ENCODE measurements at regions of chr9 and their contacts with region 1.

Region 1: DNA sequence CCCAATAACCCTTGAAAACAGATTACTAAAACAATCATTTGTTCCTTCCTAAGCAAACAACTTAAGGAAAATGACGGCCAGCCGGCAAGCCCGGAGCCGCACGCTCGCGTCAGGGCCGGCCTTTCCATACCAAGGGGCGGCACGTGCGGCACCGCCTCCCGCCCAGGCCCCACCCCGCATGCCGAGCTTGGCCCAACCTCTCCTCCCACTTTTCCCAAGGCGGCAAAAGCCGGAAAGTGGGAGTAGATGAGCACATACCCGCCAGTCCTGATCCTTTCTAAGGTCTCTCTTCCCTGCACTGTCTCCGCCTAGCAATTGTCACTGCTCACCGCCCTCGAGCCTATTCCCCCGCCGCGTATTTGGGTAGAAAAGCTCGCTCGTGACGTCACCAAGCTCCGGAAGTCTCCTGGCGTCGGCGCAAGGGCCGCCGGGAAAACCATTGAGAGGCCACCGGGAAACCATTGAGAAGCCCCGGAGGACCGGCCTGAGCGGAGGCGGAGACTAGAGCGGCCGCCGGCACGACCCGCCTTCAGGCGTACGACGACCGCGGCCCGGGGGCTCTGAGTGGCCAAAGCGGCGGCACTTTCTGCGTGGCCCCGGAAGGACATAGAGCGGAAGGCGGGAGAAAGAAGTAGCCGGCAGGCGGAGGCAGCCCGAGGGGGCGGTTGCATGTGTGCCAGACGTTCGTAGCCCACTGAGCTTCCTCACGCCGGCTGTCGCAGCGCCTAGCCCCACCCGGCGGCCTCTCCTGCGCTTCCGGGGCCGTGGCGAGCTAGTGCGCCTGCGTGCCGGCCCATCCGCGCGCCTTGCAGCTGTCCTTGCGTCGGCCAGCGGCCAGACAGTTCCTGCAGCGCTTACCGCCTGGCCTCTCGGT is at the starts of genes NCBP1 and TSTD2:
- DNase-seq: peak; percentile 99
- ATAC-seq: peak; percentile 91
- H3K4me3 ChIP-seq: peak within 1 kb of the TSS; percentile 94 to 99 (median 95)
- H3K4me3 Mint-ChIP-seq: peak within 1 kb of the TSS; percentile 97
- H3K27ac ChIP-seq: peak within 1 kb of the TSS; percentile 92 to 93
- H3K27ac Mint-ChIP-seq: peak within 1 kb of the TSS; percentile 98
- H3K4me1 ChIP-seq: peaks cover 26 to 35% of the 10 kb centered on the region in 2 donors
- H3K4me1 Mint-ChIP-seq: peaks cover 58% of the 10 kb centered on the region
- H3K27me3 ChIP-seq: no peaks in the 10 kb centered on the region
- H3K27me3 Mint-ChIP-seq: no peaks in the 10 kb centered on the region
- CTCF ChIP-seq: no peak
- total RNA-seq, gene NCBP1: 38.0 and 40.7 TPM in 2 replicates
- total RNA-seq, gene TSTD2: 29.2 and 31.1 TPM in 2 replicates

Region 2: DNA sequence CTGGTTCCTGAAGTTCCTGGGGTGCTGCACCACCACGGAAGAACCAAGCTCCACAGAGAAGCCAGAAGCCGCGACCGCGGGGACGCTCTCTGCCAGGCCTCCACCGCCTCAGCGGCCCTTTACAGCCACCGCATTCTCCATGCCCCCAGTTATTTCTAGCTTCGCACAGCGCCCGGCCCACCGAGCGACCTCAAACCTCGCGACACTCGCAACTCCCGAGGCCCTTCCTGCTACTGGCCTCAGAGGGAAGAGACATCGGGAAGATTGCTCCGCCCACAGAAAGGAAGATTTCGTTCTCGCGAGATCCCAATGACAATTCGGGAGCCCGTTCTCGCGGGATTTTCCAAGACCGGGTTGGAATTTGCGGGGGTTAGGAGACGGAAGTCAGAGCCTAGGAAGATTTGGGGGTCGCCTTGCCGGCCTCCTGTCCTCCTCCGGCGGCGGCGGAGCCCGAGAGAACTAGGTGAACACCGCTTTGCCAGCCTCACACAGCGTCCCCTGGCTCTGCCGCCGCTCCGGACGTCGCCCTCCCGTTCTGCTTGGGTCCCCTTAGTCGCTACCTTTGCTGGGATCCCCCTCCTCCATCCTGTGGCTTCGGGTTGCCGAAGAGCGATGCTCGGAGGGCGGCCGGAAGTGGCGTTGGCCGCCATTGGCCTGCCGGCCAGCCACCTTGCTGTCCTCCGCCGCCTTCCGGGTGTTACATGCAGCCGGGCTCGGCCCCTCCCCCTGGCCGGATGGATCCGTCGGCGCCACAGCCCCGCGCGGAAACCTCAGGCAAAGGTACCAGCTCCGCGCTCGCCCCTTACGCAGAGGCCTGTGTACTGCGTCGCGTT is 1757.7 kb before region 1 on chr9 and contains the start of gene ERCC6L2:
- CTCF ChIA-PET with region 1: no interaction called
- POLR2A ChIA-PET with region 1: no interaction called
- intact Hi-C with region 1: loop called (anchors 5 kb)
- DNase-seq: peak; percentile 96
- ATAC-seq: peak; percentile 89
- H3K4me3 ChIP-seq: peak within 1 kb of the TSS in 2 of 5 experiments; percentile 76 to 82
- H3K4me3 Mint-ChIP-seq: no peak within 1 kb of the TSS
- H3K27ac ChIP-seq: no peak within 1 kb of the TSS
- H3K27ac Mint-ChIP-seq: no peak within 1 kb of the TSS
- H3K4me1 ChIP-seq: peaks cover 8 to 11% of the 10 kb centered on the region in 2 donors
- H3K4me1 Mint-ChIP-seq: peaks cover 23% of the 10 kb centered on the region
- H3K27me3 ChIP-seq: no peaks in the 10 kb centered on the region
- H3K27me3 Mint-ChIP-seq: no peaks in the 10 kb centered on the region
- CTCF ChIP-seq: no peak
- total RNA-seq, gene ERCC6L2: 52.0 and 54.4 TPM in 2 replicates

Region 3: DNA sequence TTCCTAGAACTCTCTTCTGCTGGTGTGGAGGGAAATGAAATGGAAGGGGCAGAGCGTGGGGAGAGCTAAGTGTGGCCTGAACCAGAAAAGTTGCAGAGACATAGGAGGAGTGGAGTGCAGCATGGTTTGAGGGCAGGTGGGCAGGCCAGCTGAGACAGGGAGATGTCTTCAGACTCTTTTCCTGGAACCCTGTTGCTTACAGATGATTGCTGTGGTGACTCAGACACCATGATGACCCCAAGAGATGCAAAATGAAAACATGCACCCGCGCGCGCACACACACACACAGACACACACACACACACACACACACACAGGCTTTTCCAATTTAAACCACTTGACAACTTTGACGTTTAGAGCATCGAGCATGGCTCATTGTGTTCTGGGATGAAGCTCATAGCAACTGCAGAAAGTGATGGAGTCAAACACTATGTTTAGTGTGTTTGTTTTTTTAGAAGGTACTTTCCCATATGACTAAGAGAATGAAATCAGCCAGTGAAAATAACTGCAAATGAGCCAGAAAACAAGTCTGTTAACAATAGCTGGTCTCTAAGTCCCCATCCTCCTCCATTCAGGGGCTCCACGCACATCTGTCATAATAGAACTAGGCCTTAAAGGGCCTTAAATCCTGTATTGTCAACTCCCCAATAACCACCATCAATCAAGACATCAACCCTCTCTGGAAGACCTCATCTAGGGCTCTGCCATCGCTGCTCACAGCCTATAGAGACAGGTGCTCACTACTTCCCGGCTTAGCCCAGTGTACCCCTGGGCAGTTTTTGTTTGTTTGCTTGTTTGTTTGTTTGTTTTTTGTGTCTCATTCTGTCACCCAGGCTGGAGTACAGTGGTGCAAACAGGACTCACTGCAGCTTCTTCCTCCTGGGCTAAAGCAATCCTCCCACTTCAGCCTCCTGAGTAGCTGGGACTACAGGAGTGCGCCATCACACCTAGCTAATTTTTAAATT is 122.1 kb before region 1 on chr9:
- CTCF ChIA-PET with region 1: no interaction called
- POLR2A ChIA-PET with region 1: no interaction called
- intact Hi-C with region 1: no loop called
- DNase-seq: peak; percentile 9
- ATAC-seq: peak; percentile 61
- H3K4me3 ChIP-seq: no peak overlapping the region
- H3K4me3 Mint-ChIP-seq: peak overlapping the region; percentile 3
- H3K27ac ChIP-seq: no peak overlapping the region
- H3K27ac Mint-ChIP-seq: peak overlapping the region; percentile 56
- H3K4me1 ChIP-seq: no peaks in the 10 kb centered on the region
- H3K4me1 Mint-ChIP-seq: peaks cover 11% of the 10 kb centered on the region
- H3K27me3 ChIP-seq: peaks cover 0 to 3% (median 0%) of the 10 kb centered on the region in 4 experiments
- H3K27me3 Mint-ChIP-seq: peaks cover 11% of the 10 kb centered on the region
- CTCF ChIP-seq: no peak

Region 4: DNA sequence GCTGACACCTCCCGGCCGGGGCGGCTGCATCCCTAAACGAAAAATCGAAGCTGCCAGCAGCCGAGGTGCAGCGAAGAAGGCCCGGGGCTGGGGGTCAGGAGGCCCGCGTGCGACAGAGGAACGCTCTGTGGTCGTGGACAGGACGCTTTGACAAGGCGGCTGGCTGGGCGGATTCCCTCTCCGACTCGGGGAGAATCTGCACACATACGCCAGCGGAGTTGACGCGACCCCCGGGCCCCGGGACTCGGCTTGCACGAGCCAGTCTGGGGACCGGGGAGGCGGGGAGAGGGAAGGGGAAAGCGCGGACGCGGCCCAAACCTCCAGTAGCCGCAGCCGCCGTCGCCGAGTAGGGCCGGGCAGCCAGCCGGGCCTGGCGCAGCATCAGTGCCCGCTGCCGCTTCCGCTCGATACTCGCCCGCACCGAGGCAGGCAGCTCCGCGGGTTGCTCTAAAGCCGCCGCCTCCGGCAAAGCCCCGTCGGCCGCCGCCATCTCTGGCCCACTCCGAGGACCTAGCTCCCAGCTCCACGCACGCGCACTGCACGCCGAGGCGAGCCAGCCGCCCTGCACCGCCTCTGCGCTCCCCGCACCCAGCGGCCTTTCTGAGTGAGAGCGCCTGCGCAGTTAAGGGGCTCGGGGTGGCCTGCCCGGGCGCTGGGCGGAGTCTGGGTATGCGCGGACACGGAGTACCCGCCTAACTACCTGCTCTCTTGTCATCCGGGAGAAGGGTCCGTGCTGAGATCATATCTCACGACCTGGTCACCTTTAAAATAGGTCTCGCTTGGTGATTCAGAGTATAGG is 63.8 kb after region 1 on chr9 and contains the start of gene XPA:
- CTCF ChIA-PET with region 1: interaction called, 3 read pairs
- POLR2A ChIA-PET with region 1: interaction called, 7 read pairs
- intact Hi-C with region 1: loop called (anchors 1 kb)
- DNase-seq: peak; percentile 97
- ATAC-seq: peak; percentile 92
- H3K4me3 ChIP-seq: peak within 1 kb of the TSS; percentile 67 to 84 (median 74)
- H3K4me3 Mint-ChIP-seq: peak within 1 kb of the TSS; percentile 91
- H3K27ac ChIP-seq: peak within 1 kb of the TSS; percentile 77 to 82
- H3K27ac Mint-ChIP-seq: peak within 1 kb of the TSS; percentile 94
- H3K4me1 ChIP-seq: peaks cover 30 to 40% of the 10 kb centered on the region in 2 donors
- H3K4me1 Mint-ChIP-seq: peaks cover 59% of the 10 kb centered on the region
- H3K27me3 ChIP-seq: no peaks in the 10 kb centered on the region
- H3K27me3 Mint-ChIP-seq: peaks cover 7% of the 10 kb centered on the region
- CTCF ChIP-seq: no peak
- total RNA-seq, gene XPA: 21.3 and 27.4 TPM in 2 replicates

Measured in B cell (primary cell).